Transverse colon (tissue), 4 donors: ENCODE measurements at regions of chr7 and their contacts with region 1.

Region 1: DNA sequence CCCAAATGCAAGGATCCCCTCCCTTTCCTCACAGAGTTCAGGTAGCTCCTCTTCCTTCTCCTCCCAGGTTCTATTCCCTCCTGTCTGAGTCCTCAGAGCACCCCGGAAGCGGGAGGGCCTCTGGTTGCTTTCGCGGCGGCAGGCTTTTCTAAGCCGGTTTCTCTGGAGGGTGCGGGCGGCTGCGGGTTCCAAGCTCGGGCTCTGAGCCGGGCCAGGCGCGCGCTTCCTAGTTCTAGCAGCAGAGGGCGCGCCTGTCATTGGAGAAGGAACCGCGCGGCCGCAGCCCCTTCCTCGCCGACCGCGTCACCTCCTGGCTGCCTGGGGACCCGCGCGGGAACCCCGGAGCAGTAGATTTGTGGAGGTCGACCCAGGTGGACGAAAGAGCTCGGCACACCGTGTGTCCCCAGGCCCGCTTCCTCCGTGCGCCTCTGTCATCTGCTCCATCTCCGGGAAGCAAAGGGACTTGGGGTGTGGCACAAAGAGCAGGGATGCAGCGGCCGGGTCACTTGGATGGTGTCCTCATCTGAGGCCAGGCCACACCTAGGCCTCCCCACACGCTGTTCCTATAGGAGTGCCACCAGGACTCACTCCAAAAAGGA is 389.0 kb upstream of the PODXL start:
- DNase-seq: peak; percentile 42
- H3K4me3 ChIP-seq: peak overlapping the region in 2 of 4 donors; percentile 1 to 34
- H3K27ac ChIP-seq: no peak overlapping the region
- H3K4me1 ChIP-seq: peaks cover 9 to 22% (median 21%) of the 10 kb centered on the region in 4 donors
- H3K27me3 ChIP-seq: peaks cover 8% of the 10 kb centered on the region
- CTCF ChIP-seq: peak; percentile 80 to 87 (median 84)
- EP300 ChIP-seq: no peak
- POLR2A ChIP-seq: no peak

Region 2: DNA sequence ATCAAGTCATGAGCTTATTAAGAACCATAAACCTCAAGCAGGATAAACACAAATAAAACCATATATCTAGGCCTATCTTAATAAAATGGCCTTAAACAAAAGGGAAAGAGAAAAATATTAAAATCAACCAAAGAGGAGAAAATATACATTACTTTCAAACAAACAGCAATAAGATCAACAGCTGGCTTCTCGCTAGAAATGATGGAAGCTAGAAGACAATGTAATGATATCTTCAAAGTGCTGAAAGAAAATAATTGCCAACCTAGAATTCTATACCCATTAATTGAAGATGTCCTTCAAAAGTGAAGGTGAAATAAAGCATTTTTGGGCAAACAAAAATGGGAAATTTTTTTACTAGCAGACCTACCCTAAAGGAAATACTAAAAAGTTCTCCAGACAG is 246.1 kb before region 1 on chr7:
- in situ Hi-C with region 1: no loop called
- intact Hi-C with region 1: no loop called
- DNase-seq: no peak
- H3K4me3 ChIP-seq: no peak overlapping the region
- H3K27ac ChIP-seq: no peak overlapping the region
- H3K4me1 ChIP-seq: no peaks in the 10 kb centered on the region
- H3K27me3 ChIP-seq: peaks cover 3% of the 10 kb centered on the region
- CTCF ChIP-seq: no peak
- EP300 ChIP-seq: no peak
- POLR2A ChIP-seq: no peak

Region 3: DNA sequence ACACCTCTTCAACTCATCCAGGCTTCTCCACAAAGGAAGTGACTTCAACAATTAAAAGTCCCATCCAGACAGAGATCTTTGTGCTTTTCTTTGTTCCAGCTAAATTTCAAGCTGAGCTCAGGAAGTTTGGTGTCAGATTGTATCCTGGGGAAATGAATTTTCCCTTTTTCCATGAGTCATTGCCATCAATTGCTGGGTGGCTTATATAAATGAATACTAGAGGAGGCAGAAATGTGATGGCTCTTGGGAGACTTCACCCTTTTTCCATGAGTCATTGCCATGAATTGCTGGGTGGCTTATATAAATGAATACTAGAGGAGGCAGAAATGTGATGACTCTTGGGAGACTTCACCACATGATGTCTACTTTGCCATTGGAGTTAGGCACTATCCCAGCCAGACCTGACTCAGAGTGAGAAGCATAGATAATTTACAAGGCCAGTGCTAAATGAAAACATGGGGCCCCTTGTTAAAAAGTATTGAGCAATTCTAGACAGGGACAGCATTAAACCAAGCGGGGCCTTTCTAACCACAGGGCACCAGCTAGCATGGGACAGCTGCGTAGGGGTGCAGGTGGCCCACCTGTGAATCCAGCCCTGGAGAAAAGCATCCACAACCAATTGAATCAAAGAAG is 49.8 kb before region 1 on chr7:
- in situ Hi-C with region 1: no loop called
- intact Hi-C with region 1: no loop called
- DNase-seq: no peak
- H3K4me3 ChIP-seq: no peak overlapping the region
- H3K27ac ChIP-seq: no peak overlapping the region
- H3K4me1 ChIP-seq: no peaks in the 10 kb centered on the region
- H3K27me3 ChIP-seq: no peaks in the 10 kb centered on the region
- CTCF ChIP-seq: no peak
- EP300 ChIP-seq: no peak
- POLR2A ChIP-seq: no peak

Region 4: GRCh38 chr7:132250883-132251653 is 305.7 kb after region 1 on chr7:
- in situ Hi-C with region 1: loop called in 2 of 4 experiments (anchors 25 kb)
- intact Hi-C with region 1: no loop called
- DNase-seq: peak; percentile 88
- H3K4me3 ChIP-seq: no peak overlapping the region
- H3K27ac ChIP-seq: peak overlapping the region; percentile 61 to 85 (median 69)
- H3K4me1 ChIP-seq: peaks cover 15 to 29% (median 25%) of the 10 kb centered on the region in 4 donors
- H3K27me3 ChIP-seq: no peaks in the 10 kb centered on the region
- CTCF ChIP-seq: no peak
- EP300 ChIP-seq: no peak
- POLR2A ChIP-seq: no peak